Left cardiac atrium (tissue), 4 donors: ENCODE measurements at regions of chr1 and their contacts with region 1.

Region 1: DNA sequence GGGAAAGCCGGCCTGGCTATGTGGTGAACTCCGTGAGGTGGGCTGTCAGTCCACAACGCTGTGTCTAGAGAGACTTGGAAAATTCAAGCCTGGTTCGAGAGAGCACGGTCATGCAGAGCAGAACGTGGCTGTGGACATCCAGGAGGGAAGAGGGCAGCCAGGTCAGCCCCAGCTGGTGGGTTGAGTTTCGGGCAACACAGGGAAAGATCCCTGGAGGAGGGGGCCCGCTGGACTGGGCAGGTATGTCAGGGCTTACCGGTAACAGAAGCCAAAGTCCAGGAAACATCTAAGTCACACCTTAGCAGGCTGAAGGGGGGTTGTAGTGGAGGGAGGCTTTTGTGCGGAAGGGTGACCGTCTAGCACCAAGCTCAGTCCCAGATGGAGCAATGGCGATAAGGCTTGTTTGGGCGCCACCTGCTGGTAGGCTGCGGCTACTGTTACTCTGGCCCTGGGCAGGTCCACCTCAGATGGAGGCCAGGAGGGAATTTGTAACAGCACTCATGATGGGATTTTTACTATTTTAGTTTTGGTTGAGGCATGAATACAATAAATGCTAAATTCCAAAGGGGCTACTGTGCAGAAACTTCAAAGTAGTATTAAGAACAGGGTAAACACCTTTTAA is 143.3 kb upstream of the ZNF644 start:
- DNase-seq: peak; percentile 70
- ATAC-seq: peak; percentile 93 to 95

Region 2: GRCh38 chr1:90580176-90580575 is 585.0 kb before region 1 on chr1:
- intact Hi-C with region 1: loop called in 1 of 2 experiments (anchors 5 kb)
- DNase-seq: no peak
- ATAC-seq: no peak

Region 3: DNA sequence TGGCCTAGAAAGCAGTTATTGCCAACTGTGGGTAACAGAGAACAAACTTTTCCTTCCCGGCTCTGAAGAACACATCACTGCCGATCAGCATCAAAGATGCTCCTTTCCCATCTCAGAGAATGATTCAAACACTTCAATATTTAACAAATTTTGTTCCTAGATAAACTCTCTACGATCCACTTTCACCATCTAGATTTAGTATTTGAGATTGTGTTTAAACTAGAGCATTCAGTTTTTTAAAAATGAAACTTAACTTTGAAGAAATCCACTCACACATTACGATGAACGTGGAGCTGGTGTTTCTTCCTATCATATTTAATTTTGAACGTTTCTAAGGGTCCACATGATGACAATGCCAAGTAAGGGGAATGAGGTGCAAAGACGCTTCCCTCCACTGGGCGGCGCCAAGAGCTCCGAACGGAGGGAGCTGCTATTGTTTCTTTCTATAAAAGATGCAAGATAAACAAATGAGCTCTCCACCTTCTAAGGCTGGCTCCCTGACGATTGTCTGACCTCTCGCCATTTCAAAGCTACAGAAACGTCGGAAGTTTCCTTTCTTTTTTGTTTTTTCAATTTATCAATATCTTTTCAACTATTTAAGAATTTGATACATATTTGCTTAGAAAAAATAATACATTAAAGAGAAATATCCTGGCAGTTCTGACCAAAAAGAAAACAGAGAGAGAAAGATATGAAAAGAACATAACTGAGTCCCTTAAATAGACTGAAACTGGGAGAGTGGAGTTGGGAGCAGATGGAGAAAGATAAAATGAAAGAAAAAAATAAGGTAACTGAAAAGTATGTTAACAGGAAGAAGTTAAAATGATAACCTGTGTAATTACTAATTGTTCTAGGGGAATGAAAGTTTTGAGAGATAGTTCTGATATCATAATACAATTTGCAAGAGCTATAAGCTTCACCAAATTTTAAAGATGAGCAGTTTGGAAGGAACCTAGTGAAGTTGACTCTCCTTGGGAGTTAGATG is 443.6 kb before region 1 on chr1:
- intact Hi-C with region 1: loop called in 1 of 2 experiments (anchors 5 kb)
- DNase-seq: no peak
- ATAC-seq: no peak

Region 4: DNA sequence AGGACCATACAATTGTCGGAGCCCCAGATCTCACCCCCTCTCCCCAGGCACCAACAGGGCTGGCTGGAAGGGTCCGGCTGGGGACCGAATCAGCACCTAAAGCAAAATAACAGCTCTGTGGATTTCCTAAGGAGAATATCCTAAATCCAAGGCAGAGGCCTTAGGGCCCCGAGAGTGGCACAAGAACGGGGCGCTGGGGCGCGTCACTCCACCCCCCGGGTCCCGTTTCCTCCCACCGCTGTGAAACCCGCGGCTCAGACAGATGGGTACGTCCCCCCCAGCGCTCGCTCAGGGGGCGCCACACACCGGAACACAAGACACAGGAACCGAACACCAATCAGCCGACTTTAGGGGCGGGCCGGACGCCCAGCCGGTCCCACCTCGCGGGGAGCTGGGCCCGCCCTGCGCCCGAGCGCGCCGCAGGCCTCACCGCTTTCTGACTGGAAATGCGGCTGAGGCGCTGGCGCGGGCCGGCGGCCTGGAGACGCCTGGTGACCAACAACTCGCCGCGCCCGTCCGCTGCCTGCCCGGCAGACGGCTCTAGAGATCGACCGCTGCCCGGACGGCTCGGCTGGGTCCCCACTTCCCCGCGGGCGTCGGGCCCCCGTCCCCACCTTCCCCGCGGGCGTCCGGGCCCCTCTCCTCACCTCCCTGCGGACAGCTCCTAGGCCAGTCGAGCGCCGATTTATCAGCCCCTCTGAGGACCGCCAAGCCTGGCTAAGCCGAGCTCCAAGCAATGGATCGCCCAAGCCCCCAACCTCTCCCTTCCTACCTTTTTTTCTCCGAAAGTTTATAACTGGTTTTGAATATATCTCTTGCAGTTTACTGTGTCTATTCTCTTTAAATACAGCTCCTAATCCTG is 239.2 kb after region 1 on chr1 and contains the start of gene HFM1:
- intact Hi-C with region 1: loop called in 1 of 2 experiments (anchors 5 kb)
- DNase-seq: peak; percentile 90
- ATAC-seq: peak; percentile 98 to 100
- total RNA-seq, gene HFM1: 1.6 to 3.5 TPM

Region 5: GRCh38 chr1:91500756-91501522 is 335.8 kb after region 1 on chr1 and contains the start of gene CDC7:
- intact Hi-C with region 1: loop called in 1 of 2 experiments (anchors 5 kb)
- DNase-seq: peak; percentile 95
- ATAC-seq: peak; percentile 97
- total RNA-seq, gene CDC7: 1.3 to 3.2 TPM